Endothelial cell of umbilical vein (primary cell): ENCODE measurements at regions of chr11 and their contacts with region 1.

Region 1: GRCh38 chr11:67022328-67022927 is 506 bp upstream of the SYT12 start:
- DNase-seq: no peak
- H3K4me3 ChIP-seq: no peak overlapping the region
- H3K27ac ChIP-seq: no peak overlapping the region
- H3K4me1 ChIP-seq: peaks cover 6% of the 10 kb centered on the region
- H3K27me3 ChIP-seq: peaks cover 20 to 21% of the 10 kb centered on the region in 2 experiments
- CTCF ChIP-seq: no peak
- POLR2A ChIP-seq: no peak

Region 2: DNA sequence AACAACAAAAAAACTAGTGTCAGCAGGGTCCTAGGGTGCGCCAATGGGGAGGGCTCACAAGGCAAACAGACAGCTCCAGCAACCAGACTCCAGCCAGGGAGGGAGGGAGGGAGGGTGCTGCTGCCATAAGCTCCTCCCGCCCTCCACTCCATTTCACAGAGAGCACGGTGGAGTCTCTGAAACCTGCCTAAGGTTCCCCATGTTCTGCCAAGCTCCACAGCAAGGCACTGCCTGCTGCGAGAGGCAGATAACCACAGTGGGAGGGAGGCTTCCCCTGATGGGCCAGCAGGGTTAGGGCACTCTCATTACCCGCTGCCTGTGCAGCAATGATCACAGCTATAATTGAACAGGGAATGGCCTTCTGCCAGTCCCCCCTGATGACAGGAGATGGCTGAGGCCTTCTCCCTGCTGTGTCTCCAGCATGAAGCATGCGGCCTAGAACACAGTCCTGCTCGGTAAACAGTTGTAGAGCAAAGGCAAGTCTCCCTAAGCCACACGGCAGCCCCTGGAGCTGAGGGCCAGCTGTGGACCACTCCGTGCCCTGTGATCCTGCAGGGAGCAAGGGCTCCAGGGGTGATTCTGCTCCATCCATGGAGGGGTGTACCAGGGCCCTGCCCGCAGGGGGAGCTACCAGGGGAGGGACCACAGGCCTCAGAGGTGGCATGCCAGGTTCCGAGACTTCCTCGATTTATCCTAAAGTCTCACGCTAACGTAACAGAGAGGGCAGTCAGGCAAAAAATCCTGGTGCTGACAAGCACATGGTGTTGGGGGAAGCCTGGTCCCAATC is 107.2 kb before region 1 on chr11:
- CTCF ChIA-PET with region 1: no interaction called
- POLR2A ChIA-PET with region 1: no interaction called
- dilution Hi-C with region 1: no loop called
- intact Hi-C with region 1: no loop called
- DNase-seq: no peak
- H3K4me3 ChIP-seq: no peak overlapping the region
- H3K27ac ChIP-seq: no peak overlapping the region
- H3K4me1 ChIP-seq: peaks cover 5% of the 10 kb centered on the region
- H3K27me3 ChIP-seq: no peaks in the 10 kb centered on the region
- CTCF ChIP-seq: no peak
- POLR2A ChIP-seq: no peak

Region 3: GRCh38 chr11:66981976-66982578 is 40.4 kb before region 1 on chr11:
- CTCF ChIA-PET with region 1: no interaction called
- POLR2A ChIA-PET with region 1: no interaction called
- dilution Hi-C with region 1: no loop called
- intact Hi-C with region 1: loop called (anchors 5 kb)
- DNase-seq: peak; percentile 93
- H3K4me3 ChIP-seq: no peak overlapping the region
- H3K27ac ChIP-seq: no peak overlapping the region
- H3K4me1 ChIP-seq: peaks cover 6% of the 10 kb centered on the region
- H3K27me3 ChIP-seq: no peaks in the 10 kb centered on the region
- CTCF ChIP-seq: no peak
- POLR2A ChIP-seq: peak; percentile 19

Region 4: GRCh38 chr11:67010323-67010905 is 12.0 kb before region 1 on chr11:
- CTCF ChIA-PET with region 1: interaction called, 10 read pairs
- POLR2A ChIA-PET with region 1: no interaction called
- dilution Hi-C with region 1: no loop called
- intact Hi-C with region 1: no loop called
- DNase-seq: no peak
- H3K4me3 ChIP-seq: no peak overlapping the region
- H3K27ac ChIP-seq: no peak overlapping the region
- H3K4me1 ChIP-seq: no peaks in the 10 kb centered on the region
- H3K27me3 ChIP-seq: no peaks in the 10 kb centered on the region
- CTCF ChIP-seq: no peak
- POLR2A ChIP-seq: no peak

Region 5: DNA sequence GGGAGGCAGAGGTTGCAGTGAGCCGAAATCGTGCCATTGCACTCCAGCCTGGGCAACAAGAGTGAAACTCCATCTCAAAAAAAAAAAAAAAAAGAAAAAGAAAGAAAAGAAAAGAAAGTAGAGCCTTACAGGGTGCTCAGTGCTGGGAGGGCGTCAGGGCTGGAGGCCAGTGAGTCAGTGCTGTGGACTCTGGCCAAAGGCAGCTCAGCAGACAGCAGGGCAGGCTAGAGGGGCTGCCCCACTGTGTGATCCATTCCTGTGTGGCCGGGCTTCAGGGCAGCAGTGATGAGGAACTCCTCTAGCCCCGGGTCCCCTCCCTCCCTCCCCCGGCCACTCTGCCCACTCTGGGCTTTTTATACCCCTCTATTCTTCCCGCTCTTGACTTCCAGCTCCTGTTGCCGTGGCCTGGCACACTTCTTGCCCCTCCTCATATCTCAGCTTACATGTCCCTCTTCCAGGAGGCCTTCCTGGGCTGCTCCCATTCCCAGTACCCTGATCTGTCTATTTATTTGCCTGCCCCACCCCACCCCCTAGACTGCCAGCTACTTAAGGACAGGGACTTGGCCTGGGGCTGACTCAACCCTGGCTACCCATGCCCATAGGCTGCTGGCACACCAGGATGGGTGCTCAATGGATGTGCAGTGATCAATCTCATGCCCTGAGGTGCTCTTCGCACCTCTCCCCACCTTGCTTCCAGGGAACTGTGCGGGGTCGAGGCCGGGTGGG is 10.6 kb after region 1 on chr11:
- CTCF ChIA-PET with region 1: interaction called, 11 read pairs
- POLR2A ChIA-PET with region 1: interaction called, 3 read pairs
- dilution Hi-C with region 1: no loop called
- intact Hi-C with region 1: no loop called
- DNase-seq: peak; percentile 26
- H3K4me3 ChIP-seq: no peak overlapping the region
- H3K27ac ChIP-seq: no peak overlapping the region
- H3K4me1 ChIP-seq: no peaks in the 10 kb centered on the region
- H3K27me3 ChIP-seq: peaks cover 0 to 3% of the 10 kb centered on the region in 2 experiments
- CTCF ChIP-seq: no peak
- POLR2A ChIP-seq: no peak

Region 6: GRCh38 chr11:67053896-67054842 is 31.7 kb after region 1 on chr11:
- CTCF ChIA-PET with region 1: interaction called, 11 read pairs
- POLR2A ChIA-PET with region 1: no interaction called
- dilution Hi-C with region 1: no loop called
- intact Hi-C with region 1: no loop called
- DNase-seq: peak; percentile 57
- H3K4me3 ChIP-seq: no peak overlapping the region
- H3K27ac ChIP-seq: no peak overlapping the region
- H3K4me1 ChIP-seq: peaks cover 23% of the 10 kb centered on the region
- H3K27me3 ChIP-seq: peaks cover 0 to 3% of the 10 kb centered on the region in 2 experiments
- CTCF ChIP-seq: peak; percentile 77 to 83
- POLR2A ChIP-seq: no peak

Region 7: DNA sequence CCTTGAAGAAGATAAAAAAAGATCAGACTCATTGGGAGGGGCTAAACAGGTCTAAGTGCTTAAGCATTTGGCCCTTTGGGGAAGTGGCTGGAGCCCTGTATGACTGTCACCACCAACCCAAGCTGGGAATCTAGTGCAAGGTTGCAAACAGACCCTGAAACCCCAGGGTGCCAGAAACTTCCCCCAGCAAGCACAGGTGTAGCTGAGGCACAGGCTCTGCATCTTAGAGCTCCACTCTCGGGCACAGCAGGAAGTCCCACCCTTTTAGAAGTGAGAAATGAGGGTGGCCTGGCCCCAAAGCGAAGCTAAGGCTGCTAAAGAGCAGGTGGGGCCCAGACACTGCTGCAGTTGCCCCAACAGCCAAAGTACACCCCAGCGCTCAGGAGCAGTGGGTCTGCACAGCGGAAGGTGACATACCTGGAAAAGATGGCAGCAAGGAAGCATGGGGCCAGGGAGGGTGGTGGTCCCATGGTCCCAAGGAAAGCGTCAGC is 90.8 kb after region 1 on chr11:
- CTCF ChIA-PET with region 1: no interaction called
- POLR2A ChIA-PET with region 1: no interaction called
- dilution Hi-C with region 1: no loop called
- intact Hi-C with region 1: no loop called
- DNase-seq: no peak
- H3K4me3 ChIP-seq: no peak overlapping the region
- H3K27ac ChIP-seq: no peak overlapping the region
- H3K4me1 ChIP-seq: peaks cover 6% of the 10 kb centered on the region
- H3K27me3 ChIP-seq: peaks cover 4 to 5% of the 10 kb centered on the region in 2 experiments
- CTCF ChIP-seq: no peak
- POLR2A ChIP-seq: no peak